ENCODE measurements at regions of chrX and their contacts with region 1.

Region 1: DNA sequence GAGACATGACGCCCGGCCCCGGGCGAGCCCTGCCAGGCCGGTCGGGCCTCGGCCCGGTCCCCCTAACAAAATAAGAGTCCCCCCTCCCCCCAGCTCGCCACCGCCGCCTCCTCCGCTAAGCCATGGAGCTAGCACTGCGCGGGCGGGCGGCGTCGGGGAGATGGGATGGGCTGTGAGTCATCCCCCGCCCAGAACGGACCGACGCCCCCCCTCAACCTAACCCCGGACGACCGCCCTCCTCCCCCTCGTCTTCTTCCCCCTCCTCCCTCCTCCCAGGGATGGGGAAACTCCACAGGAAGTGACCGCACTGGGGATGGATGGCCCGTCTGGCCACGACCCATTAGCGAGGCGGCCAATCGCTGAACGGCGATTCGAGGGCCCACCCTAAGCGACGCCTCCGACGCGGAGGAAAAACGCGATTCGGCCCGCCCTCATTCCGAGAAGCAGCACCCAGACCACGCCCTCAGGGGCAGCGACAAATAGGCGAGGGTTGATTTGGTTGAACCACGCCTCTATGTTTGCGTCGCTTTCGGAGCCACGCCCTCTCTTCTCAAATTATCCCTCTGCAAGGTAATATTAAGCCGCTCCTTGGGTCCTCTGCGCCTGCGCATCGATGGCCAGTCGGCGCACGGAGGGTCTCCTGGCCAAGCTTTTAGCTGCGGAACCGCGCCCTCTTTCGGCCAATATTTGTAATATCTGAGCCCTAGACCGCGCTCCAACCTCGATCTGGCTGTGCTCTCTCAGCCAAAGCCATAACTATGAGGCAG is at the start of gene TFE3:
- DNase-seq: peak; percentile 98
- H3K4me3 ChIP-seq: peak within 1 kb of the TSS; percentile 87
- H3K27ac ChIP-seq: peak within 1 kb of the TSS; percentile 89
- H3K4me1 ChIP-seq: peaks cover 17% of the 10 kb centered on the region
- H3K27me3 ChIP-seq: no peaks in the 10 kb centered on the region
- CTCF ChIP-seq: peak; percentile 65
- total RNA-seq, gene TFE3: 49.5 and 56.8 TPM in 2 replicates

Region 2: DNA sequence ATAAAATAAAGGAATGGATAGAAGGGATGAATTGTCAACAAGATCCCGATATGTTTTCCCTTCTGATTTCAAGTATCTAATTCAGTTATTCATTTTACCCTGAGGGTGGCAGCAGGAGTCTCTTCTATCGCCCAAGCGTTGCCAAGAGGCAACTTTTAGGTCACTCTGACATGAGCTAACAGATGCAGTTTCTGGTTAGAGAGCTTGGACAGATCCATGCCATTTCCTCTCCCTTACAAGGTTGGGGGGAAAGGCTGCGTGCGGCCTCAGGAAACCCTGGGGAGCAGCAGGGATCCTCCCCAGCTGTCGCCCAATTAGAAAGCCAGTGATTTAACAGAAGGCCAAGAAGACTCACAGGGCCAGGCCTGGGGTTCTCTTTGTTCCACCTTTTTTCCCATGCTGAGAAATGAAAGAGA is 395.1 kb before region 1 on chrX:
- CTCF ChIA-PET with region 1: interaction called, 10 read pairs
- POLR2A ChIA-PET with region 1: no interaction called
- intact Hi-C with region 1: no loop called
- DNase-seq: peak; percentile 58
- H3K4me3 ChIP-seq: no peak overlapping the region
- H3K27ac ChIP-seq: no peak overlapping the region
- H3K4me1 ChIP-seq: no peaks in the 10 kb centered on the region
- H3K27me3 ChIP-seq: no peaks in the 10 kb centered on the region
- CTCF ChIP-seq: peak; percentile 45; the same call in 1 of the 2 replicates

Region 3: GRCh38 chrX:48864210-48864609 is 179.2 kb before region 1 on chrX:
- CTCF ChIA-PET with region 1: no interaction called
- POLR2A ChIA-PET with region 1: no interaction called
- intact Hi-C with region 1: no loop called
- DNase-seq: no peak
- H3K4me3 ChIP-seq: no peak overlapping the region
- H3K27ac ChIP-seq: no peak overlapping the region
- H3K4me1 ChIP-seq: no peaks in the 10 kb centered on the region
- H3K27me3 ChIP-seq: no peaks in the 10 kb centered on the region
- CTCF ChIP-seq: no peak

Region 4: DNA sequence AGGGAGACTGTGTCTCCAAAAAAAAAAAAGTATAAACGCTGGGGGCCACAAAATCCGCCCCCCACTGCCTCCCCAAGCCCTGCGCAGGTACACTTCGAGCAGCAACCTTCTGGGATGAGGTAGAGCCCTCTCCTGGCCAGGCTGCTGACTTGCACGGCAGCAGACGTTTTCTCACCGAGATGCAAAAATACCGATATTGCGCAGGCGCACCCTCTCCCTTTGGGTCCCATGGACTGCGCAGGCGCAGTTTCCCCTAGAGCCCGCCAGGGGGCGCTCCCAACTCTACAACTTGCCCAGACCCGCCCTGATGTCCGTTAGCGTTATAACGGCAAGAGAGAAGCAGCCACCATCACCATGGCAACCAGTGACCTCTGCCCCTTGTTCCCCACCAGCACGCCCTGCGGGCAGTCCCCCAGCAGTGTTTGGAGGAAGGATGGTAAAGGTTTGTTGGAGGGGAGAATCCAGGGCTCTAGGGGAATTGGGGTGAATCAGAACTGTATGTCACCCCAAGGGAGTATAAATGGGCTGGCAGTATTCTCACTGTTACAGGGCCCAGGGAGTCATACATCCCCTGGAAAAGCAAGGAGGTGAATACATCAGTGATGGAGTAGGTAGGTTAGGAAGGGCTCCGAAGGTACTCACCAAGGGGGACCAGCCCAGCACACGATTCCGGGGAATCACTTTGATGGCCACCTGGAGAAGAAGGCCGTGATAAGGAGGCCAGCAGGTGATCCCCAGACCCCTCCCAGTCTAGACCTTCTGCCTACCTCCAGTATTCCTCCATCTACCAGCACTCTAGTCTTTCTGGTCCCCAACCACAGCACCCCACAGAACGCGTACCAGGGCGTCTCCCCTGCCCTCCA is 126.0 kb before region 1 on chrX:
- CTCF ChIA-PET with region 1: no interaction called
- POLR2A ChIA-PET with region 1: no interaction called
- intact Hi-C with region 1: loop called (anchors 1 kb)
- DNase-seq: peak; percentile 90
- H3K4me3 ChIP-seq: peak overlapping the region; percentile 69
- H3K27ac ChIP-seq: peak overlapping the region; percentile 16
- H3K4me1 ChIP-seq: peaks cover 4% of the 10 kb centered on the region
- H3K27me3 ChIP-seq: no peaks in the 10 kb centered on the region
- CTCF ChIP-seq: peak; percentile 97

Region 5: GRCh38 chrX:48958635-48959094 is 84.7 kb before region 1 on chrX:
- CTCF ChIA-PET with region 1: no interaction called
- POLR2A ChIA-PET with region 1: no interaction called
- intact Hi-C with region 1: no loop called
- DNase-seq: peak; percentile 31
- H3K4me3 ChIP-seq: peak overlapping the region; percentile 75
- H3K27ac ChIP-seq: peak overlapping the region; percentile 96
- H3K4me1 ChIP-seq: no peaks in the 10 kb centered on the region
- H3K27me3 ChIP-seq: no peaks in the 10 kb centered on the region
- CTCF ChIP-seq: no peak

Region 6: DNA sequence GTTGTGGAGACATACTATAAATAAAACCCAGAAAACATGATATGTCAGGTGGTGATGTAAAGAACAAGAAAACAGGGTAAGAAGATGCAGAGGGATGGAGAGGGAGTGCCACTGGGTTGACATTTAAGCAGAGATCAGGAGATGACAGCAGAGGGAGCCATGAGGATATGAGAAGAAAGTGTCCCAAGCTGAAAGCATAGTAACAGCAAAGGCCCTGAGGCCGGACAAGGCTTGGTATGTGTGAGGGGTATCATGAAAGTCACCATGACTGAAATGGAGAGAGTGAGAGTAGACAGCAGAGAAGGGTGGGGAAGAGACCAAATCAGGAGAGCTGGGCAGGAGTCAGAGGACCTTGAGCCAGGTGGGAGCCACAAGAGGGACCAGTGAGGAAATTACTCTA is 76.7 kb after region 1 on chrX:
- CTCF ChIA-PET with region 1: no interaction called
- POLR2A ChIA-PET with region 1: no interaction called
- intact Hi-C with region 1: no loop called
- DNase-seq: no peak
- H3K4me3 ChIP-seq: no peak overlapping the region
- H3K27ac ChIP-seq: no peak overlapping the region
- H3K4me1 ChIP-seq: no peaks in the 10 kb centered on the region
- H3K27me3 ChIP-seq: no peaks in the 10 kb centered on the region
- CTCF ChIP-seq: no peak

Measured in A673 (cell line).